Ascending aorta (tissue), 2 donors: ENCODE measurements at regions of chr16 and their contacts with region 1.

Region 1: GRCh38 chr16:65117811-65118448 is 3.9 kb downstream of the CDH11 start:
- DNase-seq: peak in 1 of 2 donors; percentile 84
- H3K4me3 ChIP-seq: no peak overlapping the region
- H3K27ac ChIP-seq: peak overlapping the region in 1 of 2 donors; percentile 40
- H3K4me1 ChIP-seq: peaks cover 3 to 35% of the 10 kb centered on the region in 2 donors
- H3K27me3 ChIP-seq: no peaks in the 10 kb centered on the region
- CTCF ChIP-seq: peak; percentile 63 to 91 (median 83)

Region 2: GRCh38 chr16:64089697-64090096 is 1028.2 kb before region 1 on chr16:
- intact Hi-C with region 1: loop called (anchors 10 kb)
- DNase-seq: no peak
- H3K4me3 ChIP-seq: no peak overlapping the region
- H3K27ac ChIP-seq: no peak overlapping the region
- H3K4me1 ChIP-seq: no peaks in the 10 kb centered on the region
- H3K27me3 ChIP-seq: no peaks in the 10 kb centered on the region
- CTCF ChIP-seq: peak in 2 of 3 experiments; percentile 21 to 52

Region 3: GRCh38 chr16:64478252-64478906 is 639.6 kb before region 1 on chr16:
- intact Hi-C with region 1: loop called (anchors 5 kb)
- DNase-seq: no peak
- H3K4me3 ChIP-seq: peak overlapping the region in 1 of 2 donors; percentile 18
- H3K27ac ChIP-seq: peak overlapping the region in 1 of 2 donors; percentile 64
- H3K4me1 ChIP-seq: peaks cover 6 to 29% of the 10 kb centered on the region in 2 donors
- H3K27me3 ChIP-seq: no peaks in the 10 kb centered on the region
- CTCF ChIP-seq: no peak

Region 4: DNA sequence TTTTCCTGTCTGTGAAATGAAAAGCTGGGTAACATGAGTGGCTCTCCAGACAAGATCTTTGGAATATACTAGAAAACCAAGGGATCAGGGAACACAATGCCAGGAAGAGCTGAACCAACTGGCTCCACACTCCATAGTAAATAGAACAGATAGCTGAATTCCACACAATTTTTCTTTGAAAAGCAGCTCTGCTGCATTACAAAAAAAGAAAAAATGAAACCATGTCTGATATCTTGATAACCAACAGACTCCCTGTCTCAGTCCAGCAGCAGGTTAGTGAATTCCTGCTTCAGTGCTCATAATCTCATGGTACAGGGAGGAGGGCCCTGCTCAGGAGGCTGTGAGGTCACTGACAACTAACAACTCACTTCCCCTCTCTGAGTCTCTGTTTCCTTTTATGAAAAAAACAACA is 93.2 kb before region 1 on chr16:
- intact Hi-C with region 1: no loop called
- DNase-seq: no peak
- H3K4me3 ChIP-seq: no peak overlapping the region
- H3K27ac ChIP-seq: peak overlapping the region in 1 of 2 donors; percentile 26
- H3K4me1 ChIP-seq: no peaks in the 10 kb centered on the region
- H3K27me3 ChIP-seq: no peaks in the 10 kb centered on the region
- CTCF ChIP-seq: no peak

Region 5: DNA sequence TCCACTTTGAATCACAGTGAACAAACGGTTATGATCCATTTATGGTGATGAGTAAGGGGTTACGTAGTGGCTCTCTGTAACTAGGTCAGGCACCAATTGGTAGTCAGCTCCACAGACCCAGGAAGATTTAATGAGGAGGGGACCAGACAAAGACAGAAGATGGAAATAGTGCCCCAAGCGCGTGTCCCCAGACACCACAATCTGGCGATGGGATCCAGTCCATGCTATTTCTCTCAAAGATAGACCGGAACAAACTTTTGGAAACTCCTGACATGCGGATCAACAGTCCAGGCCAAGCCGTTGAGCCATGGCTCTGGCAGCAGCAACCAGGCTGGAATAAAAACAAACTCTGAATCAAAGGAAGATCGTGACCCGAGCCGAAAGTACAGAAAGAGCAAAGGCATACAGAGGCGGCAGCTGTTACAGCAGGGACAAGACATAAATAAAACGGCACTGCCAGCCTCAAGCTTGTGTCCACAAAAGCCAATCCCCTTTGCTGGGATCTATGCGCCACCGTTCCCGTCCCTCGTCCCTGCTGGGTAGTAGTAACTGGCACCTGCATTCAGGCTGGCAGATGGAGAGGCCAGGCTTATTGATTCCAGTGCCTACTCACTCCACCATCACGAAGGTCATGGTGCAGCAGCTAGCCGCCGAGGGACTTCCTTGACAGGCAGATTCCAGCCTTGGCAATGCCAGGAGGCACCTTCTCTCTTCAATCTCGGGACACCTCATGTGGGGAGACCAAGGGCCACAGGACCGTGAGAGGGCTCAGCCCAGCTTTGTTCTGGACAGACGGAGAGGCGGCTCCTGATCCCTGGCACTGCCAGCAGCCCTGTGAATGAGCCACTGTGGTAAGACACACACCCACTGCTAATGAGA is 46.3 kb before region 1 on chr16:
- intact Hi-C with region 1: loop called (anchors 2 kb)
- DNase-seq: peak; percentile 16 to 79
- H3K4me3 ChIP-seq: peak overlapping the region; percentile 11 to 52
- H3K27ac ChIP-seq: peak overlapping the region; percentile 62 to 80
- H3K4me1 ChIP-seq: peaks cover 0 to 24% of the 10 kb centered on the region in 2 donors
- H3K27me3 ChIP-seq: no peaks in the 10 kb centered on the region
- CTCF ChIP-seq: no peak

Region 6: GRCh38 chr16:66045626-66046025 is 927.7 kb after region 1 on chr16:
- intact Hi-C with region 1: loop called (anchors 10 kb)
- DNase-seq: no peak
- H3K4me3 ChIP-seq: no peak overlapping the region
- H3K27ac ChIP-seq: no peak overlapping the region
- H3K4me1 ChIP-seq: no peaks in the 10 kb centered on the region
- H3K27me3 ChIP-seq: no peaks in the 10 kb centered on the region
- CTCF ChIP-seq: no peak